Naive thymus-derived CD4-positive, alpha-beta T cell (primary cell): ENCODE measurements at regions of chr10 and their contacts with region 1.

Region 1: DNA sequence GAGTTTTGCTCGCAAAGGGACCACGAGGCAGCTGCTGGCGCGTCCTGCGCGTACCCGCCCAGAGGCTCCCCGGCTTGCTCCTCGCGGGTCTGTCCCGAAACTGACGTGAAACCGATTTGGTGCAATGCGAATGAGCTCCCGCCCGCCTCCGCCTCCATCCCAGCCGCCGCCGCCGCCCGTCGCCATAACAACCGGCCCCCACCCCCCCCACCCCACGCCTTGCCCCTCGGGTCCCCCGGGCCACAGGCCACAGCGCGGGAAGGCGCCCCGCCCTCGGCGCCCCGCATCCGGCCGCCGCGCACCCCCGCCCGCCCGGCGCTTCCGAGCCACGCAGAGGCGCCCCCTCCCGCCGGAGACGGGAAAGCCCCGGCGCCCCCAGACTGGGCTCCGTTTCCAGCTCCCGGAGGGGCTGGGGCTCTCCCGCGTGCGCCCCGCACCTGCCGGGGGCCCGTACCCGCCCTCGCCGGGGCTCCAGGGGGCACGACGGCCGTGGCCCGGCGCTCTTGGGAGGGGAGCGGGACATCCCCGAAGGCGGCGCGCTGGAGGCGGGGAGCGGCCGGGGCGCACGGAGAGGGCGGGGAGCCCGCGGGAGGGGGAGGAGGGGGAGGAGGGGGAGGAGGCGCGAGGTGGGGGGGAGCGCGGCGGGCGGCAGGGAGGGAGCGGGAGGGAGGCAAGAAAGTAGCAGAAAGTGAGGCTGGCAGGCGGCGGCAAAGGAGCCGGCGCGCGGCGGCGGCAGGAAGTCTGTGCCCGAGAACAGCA is at the start of gene CAMK1D:
- DNase-seq: peak; percentile 83 to 92 (median 90)
- ATAC-seq: peak; percentile 84
- H3K4me3 ChIP-seq: peak within 1 kb of the TSS; percentile 83
- H3K4me3 Mint-ChIP-seq: peak within 1 kb of the TSS; percentile 78 to 99 (median 97)
- H3K27ac ChIP-seq: peak within 1 kb of the TSS; percentile 89
- H3K27ac Mint-ChIP-seq: peak within 1 kb of the TSS; percentile 86 to 99 (median 97)
- H3K4me1 ChIP-seq: peaks cover 18 to 19% of the 10 kb centered on the region in 2 donors
- H3K4me1 Mint-ChIP-seq: peaks cover 23 to 51% (median 42%) of the 10 kb centered on the region in 7 donors
- H3K27me3 ChIP-seq: no peaks in the 10 kb centered on the region
- H3K27me3 Mint-ChIP-seq: peaks cover 0 to 64% (median 0%) of the 10 kb centered on the region in 5 donors
- total RNA-seq, gene CAMK1D: 12.5 to 43.2 (median 18.7) TPM

Region 2: DNA sequence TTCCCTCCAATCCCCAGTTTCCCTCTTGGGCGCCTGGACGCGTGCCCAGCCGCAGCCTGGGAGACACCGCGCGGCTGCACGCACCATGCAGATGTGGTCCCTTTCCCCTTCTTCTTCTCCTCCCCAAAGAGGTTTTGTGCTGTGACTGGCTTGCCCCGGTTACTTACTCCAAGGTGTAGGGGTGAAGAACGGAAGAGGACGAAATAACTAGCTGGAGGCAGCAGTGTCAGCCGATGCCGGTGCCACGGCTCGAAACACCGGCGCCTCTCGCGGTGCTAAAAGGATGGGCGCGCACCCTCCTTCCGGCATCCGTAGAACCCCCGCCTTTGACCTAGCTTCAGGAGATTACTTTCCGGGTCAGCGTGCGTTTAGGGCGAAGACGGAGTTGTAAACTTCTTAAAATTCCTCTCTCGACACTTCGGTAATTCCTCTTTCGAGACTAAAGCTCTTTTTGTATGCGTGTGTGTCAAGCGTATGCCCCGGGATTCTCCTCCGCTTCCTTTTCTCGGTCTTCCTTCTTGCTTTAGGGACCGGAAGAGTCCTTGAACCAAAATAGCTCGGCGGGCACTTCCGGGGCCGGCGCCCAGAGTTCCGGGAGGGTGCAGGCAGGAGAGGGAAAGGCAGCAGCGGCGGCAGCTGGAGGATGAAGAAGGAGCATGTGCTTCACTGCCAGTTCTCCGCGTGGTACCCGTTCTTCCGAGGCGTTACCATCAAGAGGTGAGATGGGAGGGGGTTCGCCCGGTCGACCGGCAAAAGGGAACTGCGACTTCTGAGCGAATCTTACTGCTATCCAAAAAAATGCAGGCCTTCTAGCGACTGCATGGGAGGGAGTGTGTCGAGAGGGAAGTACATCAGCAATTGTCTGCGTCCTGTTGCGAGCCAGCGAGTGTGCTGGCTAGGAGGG is 153.2 kb before region 1 on chr10 and contains the starts of genes CDC123 and NUDT5:
- CTCF ChIA-PET with region 1: no interaction called
- POLR2A ChIA-PET with region 1: no interaction called
- intact Hi-C with region 1: loop called (anchors 1 to 5 kb)
- DNase-seq: peak; percentile 77 to 89 (median 87)
- ATAC-seq: peak; percentile 96
- H3K4me3 ChIP-seq: peak within 1 kb of the TSS; percentile 84
- H3K4me3 Mint-ChIP-seq: peak within 1 kb of the TSS; percentile 94 to 99 (median 97)
- H3K27ac ChIP-seq: peak within 1 kb of the TSS; percentile 97
- H3K27ac Mint-ChIP-seq: peak within 1 kb of the TSS; percentile 96 to 99 (median 99)
- H3K4me1 ChIP-seq: peaks cover 9 to 12% of the 10 kb centered on the region in 2 donors
- H3K4me1 Mint-ChIP-seq: peaks cover 43 to 72% (median 59%) of the 10 kb centered on the region in 7 donors
- H3K27me3 ChIP-seq: no peaks in the 10 kb centered on the region
- H3K27me3 Mint-ChIP-seq: no peaks in the 10 kb centered on the region
- total RNA-seq, gene CDC123: 27.0 to 97.8 (median 34.2) TPM
- total RNA-seq, gene NUDT5: 24.5 to 89.4 (median 47.4) TPM

Region 3: DNA sequence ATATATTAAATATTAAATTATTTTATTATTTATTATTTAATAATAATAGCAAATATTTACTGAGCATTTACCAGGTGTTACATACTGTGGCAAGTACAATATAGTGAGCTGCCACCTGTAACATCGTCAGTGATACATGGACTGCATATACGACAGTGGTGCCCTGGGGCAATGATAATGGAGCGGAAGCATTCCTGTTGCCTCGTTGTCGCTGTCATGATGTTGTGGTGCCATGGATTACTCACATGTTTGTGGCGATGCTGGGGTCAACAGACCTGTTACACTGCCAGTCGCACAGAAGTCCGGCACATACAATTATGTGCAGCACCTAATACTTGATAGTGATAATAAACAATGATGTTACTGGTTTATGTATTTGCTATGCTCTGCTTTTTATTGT is 20.9 kb after region 1 on chr10:
- CTCF ChIA-PET with region 1: interaction called, 8 read pairs
- POLR2A ChIA-PET with region 1: interaction called, 11 read pairs
- intact Hi-C with region 1: loop called (anchors 1 to 2 kb)
- DNase-seq: no peak
- ATAC-seq: no peak
- H3K4me3 ChIP-seq: no peak overlapping the region
- H3K4me3 Mint-ChIP-seq: no peak overlapping the region
- H3K27ac ChIP-seq: no peak overlapping the region
- H3K27ac Mint-ChIP-seq: no peak overlapping the region
- H3K4me1 ChIP-seq: peaks cover 9 to 14% of the 10 kb centered on the region in 2 donors
- H3K4me1 Mint-ChIP-seq: peaks cover 13 to 40% (median 27%) of the 10 kb centered on the region in 7 donors
- H3K27me3 ChIP-seq: no peaks in the 10 kb centered on the region
- H3K27me3 Mint-ChIP-seq: no peaks in the 10 kb centered on the region

Region 4: GRCh38 chr10:12420530-12421120 is 71.6 kb after region 1 on chr10:
- CTCF ChIA-PET with region 1: no interaction called
- POLR2A ChIA-PET with region 1: no interaction called
- intact Hi-C with region 1: no loop called
- DNase-seq: no peak
- ATAC-seq: no peak
- H3K4me3 ChIP-seq: no peak overlapping the region
- H3K4me3 Mint-ChIP-seq: no peak overlapping the region
- H3K27ac ChIP-seq: no peak overlapping the region
- H3K27ac Mint-ChIP-seq: peak overlapping the region in 3 of 9 donors; percentile 41 to 52 (median 46)
- H3K4me1 ChIP-seq: peaks cover 3 to 4% of the 10 kb centered on the region in 2 donors
- H3K4me1 Mint-ChIP-seq: peaks cover 13 to 66% (median 50%) of the 10 kb centered on the region in 7 donors
- H3K27me3 ChIP-seq: no peaks in the 10 kb centered on the region
- H3K27me3 Mint-ChIP-seq: no peaks in the 10 kb centered on the region

Region 5: GRCh38 chr10:12594448-12594944 is 245.4 kb after region 1 on chr10:
- CTCF ChIA-PET with region 1: interaction called, 3 read pairs
- POLR2A ChIA-PET with region 1: interaction called, 4 read pairs
- intact Hi-C with region 1: loop called in 1 of 2 experiments (anchors 5 kb)
- DNase-seq: peak in 8 of 9 donors; percentile 25 to 66 (median 52)
- ATAC-seq: peak; percentile 78
- H3K4me3 ChIP-seq: no peak overlapping the region
- H3K4me3 Mint-ChIP-seq: peak overlapping the region; percentile 61 to 90 (median 72)
- H3K27ac ChIP-seq: peak overlapping the region; percentile 41
- H3K27ac Mint-ChIP-seq: peak overlapping the region; percentile 90 to 99 (median 94)
- H3K4me1 ChIP-seq: peaks cover 15 to 65% of the 10 kb centered on the region in 2 donors
- H3K4me1 Mint-ChIP-seq: peaks cover 43 to 100% (median 94%) of the 10 kb centered on the region in 7 donors
- H3K27me3 ChIP-seq: no peaks in the 10 kb centered on the region
- H3K27me3 Mint-ChIP-seq: no peaks in the 10 kb centered on the region

Region 6: GRCh38 chr10:12710594-12711349 is 361.7 kb after region 1 on chr10:
- CTCF ChIA-PET with region 1: no interaction called
- POLR2A ChIA-PET with region 1: no interaction called
- intact Hi-C with region 1: loop called (anchors 2 to 5 kb)
- DNase-seq: peak; percentile 50 to 83 (median 71)
- ATAC-seq: peak; percentile 89
- H3K4me3 ChIP-seq: no peak overlapping the region
- H3K4me3 Mint-ChIP-seq: peak overlapping the region in 1 of 10 donors; percentile 42
- H3K27ac ChIP-seq: no peak overlapping the region
- H3K27ac Mint-ChIP-seq: peak overlapping the region in 4 of 9 donors; percentile 4 to 79 (median 46)
- H3K4me1 ChIP-seq: no peaks in the 10 kb centered on the region
- H3K4me1 Mint-ChIP-seq: peaks cover 5 to 53% (median 8%) of the 10 kb centered on the region in 7 donors
- H3K27me3 ChIP-seq: no peaks in the 10 kb centered on the region
- H3K27me3 Mint-ChIP-seq: no peaks in the 10 kb centered on the region

Region 7: GRCh38 chr10:12729885-12730284 is 380.8 kb after region 1 on chr10:
- CTCF ChIA-PET with region 1: no interaction called
- POLR2A ChIA-PET with region 1: no interaction called
- intact Hi-C with region 1: no loop called
- DNase-seq: no peak
- ATAC-seq: no peak
- H3K4me3 ChIP-seq: no peak overlapping the region
- H3K4me3 Mint-ChIP-seq: no peak overlapping the region
- H3K27ac ChIP-seq: no peak overlapping the region
- H3K27ac Mint-ChIP-seq: no peak overlapping the region
- H3K4me1 ChIP-seq: peaks cover 0 to 6% of the 10 kb centered on the region in 2 donors
- H3K4me1 Mint-ChIP-seq: peaks cover 2 to 16% (median 7%) of the 10 kb centered on the region in 7 donors
- H3K27me3 ChIP-seq: no peaks in the 10 kb centered on the region
- H3K27me3 Mint-ChIP-seq: no peaks in the 10 kb centered on the region